GM10248 (cell line): ENCODE measurements at regions of chr16 and their contacts with region 1.

Region 1: GRCh38 chr16:30445408-30446202 is at the start of gene SEPHS2:
- DNase-seq: peak; percentile 94
- CTCF ChIP-seq: peak; percentile 59

Region 2: DNA sequence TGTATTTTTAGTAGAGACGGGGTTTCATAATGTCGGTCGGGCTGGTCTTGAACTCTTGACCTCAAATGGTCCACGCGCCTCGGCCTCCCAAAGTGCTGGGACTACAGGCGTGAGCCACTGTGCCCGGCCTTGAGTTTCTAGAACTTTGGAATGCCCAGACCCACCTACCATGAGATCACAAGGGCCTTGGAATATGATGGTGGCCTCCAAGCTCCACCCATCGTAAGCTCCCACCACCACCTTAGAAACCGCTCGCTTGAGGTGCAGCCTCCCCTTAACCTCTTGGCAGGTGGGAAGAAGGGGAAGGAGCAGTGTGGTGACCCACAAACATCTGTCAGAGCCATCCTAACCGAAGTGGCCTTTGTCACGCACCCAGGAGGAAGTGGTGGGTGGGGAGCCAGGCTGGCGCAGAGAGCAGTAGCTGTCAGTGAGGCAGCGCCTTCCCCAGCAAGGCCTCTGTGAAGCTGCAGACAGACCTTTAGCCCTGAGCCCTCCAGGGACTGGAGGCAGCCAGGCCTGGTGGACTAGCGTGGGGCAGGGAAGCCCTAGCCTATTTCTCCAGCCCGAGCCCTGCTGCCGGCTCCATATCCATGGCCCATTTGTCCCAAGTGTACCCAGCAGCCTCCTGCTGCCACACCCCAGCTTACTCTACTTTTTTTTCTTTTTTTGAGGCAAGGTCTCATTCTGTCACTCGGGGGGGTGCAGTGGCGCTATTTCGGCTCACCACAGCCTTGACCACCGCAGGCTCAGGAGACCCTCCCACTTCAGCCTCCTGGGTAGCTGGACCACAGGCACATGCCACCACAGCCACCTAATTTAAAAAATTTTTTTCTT is 13.2 kb after region 1 on chr16:
- CTCF ChIA-PET with region 1: interaction called, 41 read pairs
- POLR2A ChIA-PET with region 1: interaction called, 3 read pairs
- DNase-seq: peak; percentile 77
- CTCF ChIP-seq: no peak

Region 3: DNA sequence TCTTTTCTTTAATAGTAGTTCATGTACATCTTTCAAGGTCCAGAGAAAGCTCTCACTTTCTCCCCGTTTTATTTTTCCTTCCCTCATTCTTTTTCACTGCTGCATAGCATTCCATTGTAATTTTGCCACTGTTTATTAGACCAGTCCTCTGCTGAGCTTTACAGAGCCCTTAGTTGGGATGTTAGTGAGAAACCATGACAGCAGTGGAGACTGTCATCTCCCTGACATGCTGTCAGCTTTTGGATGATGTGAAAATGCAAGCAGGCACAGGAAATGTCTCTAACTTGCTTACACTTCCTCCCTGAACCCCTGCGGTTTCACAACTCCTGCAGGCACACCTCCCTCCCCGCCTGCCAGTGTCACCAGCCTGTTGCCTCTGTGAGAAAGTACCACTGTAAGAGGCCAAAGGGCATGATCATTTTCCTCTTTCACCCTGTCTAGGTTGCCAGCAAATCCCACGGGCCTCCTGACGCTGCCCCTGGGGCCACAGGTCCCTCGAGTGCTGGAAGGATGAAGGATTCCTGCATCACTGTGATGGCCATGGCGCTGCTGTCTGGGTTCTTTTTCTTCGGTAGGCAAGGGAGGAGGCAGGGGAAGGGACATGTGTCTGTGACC is 26.8 kb after region 1 on chr16 and contains the start of gene ITGAL:
- CTCF ChIA-PET with region 1: interaction called, 24 read pairs
- POLR2A ChIA-PET with region 1: interaction called, 3 read pairs
- DNase-seq: peak; percentile 70
- CTCF ChIP-seq: no peak

Region 4: GRCh38 chr16:30602616-30603277 is 157.1 kb after region 1 on chr16:
- CTCF ChIA-PET with region 1: interaction called, 12 read pairs
- POLR2A ChIA-PET with region 1: no interaction called
- DNase-seq: no peak
- CTCF ChIP-seq: no peak

Region 5: DNA sequence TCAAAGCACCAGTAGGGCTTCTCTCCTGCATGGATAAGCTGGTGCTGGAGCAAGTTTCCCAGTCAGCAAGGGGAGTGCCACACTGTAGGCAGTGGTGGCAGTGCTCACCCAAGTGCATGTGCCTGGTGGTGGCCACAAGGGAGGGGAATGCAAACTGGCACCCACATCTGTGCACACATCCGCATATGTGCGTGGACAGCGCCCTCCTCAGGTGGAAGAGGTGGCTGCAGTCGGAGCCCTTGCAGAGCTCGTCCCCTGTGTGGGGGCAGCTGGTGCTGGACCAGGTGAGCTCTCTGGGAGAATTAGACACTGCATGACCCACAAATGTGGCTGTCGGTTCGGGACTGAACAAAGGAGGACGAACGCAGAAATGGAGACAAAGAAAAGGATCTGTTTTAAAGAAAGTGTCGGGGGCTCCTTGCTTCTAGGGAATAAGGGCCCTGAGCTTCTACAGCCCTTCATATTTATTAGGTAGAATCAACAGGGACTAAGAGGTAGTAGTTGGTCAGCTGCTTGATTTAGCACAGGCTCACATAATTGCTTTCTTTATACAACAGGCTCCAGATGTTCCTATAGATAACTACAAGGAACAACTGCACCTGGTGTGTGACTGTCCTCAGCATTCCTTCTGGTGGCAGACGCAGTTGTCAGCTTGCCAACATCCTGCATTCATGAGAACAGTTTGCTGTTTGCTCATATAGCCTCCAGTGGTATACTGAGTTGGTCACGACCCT is 169.9 kb after region 1 on chr16:
- CTCF ChIA-PET with region 1: interaction called, 12 read pairs
- POLR2A ChIA-PET with region 1: no interaction called
- DNase-seq: peak; percentile 50
- CTCF ChIP-seq: peak; percentile 74

Region 6: GRCh38 chr16:30628627-30629540 is 183.3 kb after region 1 on chr16:
- CTCF ChIA-PET with region 1: interaction called, 12 read pairs
- POLR2A ChIA-PET with region 1: no interaction called
- DNase-seq: peak; percentile 73
- CTCF ChIP-seq: peak; percentile 81

Region 7: DNA sequence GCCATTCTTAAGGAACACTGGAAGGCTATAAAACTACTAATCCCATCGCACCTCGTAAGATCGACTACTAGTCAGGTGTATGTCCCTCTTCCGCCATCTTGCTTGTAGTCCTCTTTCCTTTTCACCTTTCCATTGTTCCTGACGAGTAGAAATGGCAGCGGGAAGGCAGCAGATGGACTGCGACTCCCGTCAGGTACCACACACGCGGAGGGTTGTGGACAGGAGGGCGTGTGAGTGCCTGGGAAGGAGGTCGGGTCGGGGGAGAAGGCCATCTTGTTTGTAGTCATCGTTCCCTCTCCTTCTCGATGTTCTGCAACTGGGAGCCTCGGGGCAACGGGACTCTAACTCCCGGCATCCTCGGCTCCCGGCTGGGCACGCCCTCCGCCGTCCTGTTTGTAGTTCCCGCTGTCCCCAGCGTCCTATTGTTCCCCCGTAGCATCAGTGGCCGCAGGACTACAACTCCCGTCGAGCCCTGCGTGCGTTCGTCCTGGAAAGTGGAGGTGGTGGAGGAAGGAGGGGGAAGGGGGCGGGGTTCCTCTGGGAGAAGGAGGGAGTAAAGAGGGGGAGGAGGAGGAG is 477.4 kb after region 1 on chr16:
- CTCF ChIA-PET with region 1: no interaction called
- POLR2A ChIA-PET with region 1: no interaction called
- DNase-seq: peak; percentile 95
- CTCF ChIP-seq: no peak